Left colon (tissue), 2 donors: ENCODE measurements at regions of chrX and their contacts with region 1.

Region 1: GRCh38 chrX:79195027-79195426 is 50.5 kb downstream of the GPR174 start:
- DNase-seq: no peak
- ATAC-seq: no peak

Region 2: DNA sequence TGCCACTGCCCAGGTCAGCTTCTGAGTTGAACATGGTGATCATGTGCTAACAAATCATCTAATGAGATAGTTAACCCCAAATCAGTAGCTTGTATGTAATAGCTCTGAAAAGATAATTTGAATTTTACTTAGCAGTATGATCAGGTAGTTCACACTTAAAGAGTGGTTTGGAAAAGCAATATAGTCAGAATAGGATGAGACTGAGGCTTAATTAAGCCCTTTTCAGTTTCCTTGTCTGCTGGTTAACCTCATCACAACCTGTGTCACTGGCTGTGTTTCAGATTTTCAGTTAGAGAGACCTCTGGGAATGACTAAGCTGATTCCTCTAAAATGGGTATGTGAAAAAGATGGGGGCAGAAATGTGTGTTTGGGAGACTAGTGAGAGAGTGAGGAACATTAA is 12.4 kb before region 1 on chrX:
- intact Hi-C with region 1: loop called in 1 of 2 experiments (anchors 1 kb)
- DNase-seq: no peak
- ATAC-seq: no peak